ENCODE measurements at regions of chr9 and their contacts with region 1.

Region 1: GRCh38 chr9:121735065-121735789 is 83.8 kb downstream of the DAB2IP start:
- DNase-seq: peak; percentile 69 to 77
- ATAC-seq: peak; percentile 88 to 94
- H3K4me3 ChIP-seq: no peak overlapping the region; the same call in 2 of the 3 replicates
- H3K27ac ChIP-seq: peak overlapping the region; percentile 8 to 80; a peak in 3 of 6 replicates
- H3K4me1 ChIP-seq: peaks cover 38% of the 10 kb centered on the region
- CTCF ChIP-seq: peak; percentile 53; the same call in 2 of the 3 replicates
- EP300 ChIP-seq: no peak
- POLR2A ChIP-seq: no peak
- RAD21 ChIP-seq: peak; percentile 48 to 61

Region 2: DNA sequence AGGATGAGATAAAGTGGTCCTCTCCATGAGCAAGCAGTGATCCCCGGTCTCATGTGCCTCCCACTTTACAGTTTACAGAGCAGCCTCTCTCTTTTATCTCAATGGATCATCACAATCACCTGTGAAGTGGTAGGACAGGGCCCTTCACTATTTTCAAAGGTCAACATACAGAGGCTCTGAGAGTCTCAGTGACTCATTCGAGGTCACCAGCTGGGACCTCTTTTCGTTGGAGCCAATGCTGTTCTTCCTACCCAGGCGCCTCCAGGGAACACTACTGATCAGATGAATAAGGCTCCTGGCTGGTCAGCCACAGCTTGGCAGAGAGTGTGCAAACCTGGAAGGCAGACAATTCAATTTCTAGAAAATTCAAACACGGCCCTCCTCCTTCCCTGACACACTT is 252.2 kb before region 1 on chr9:
- CTCF ChIA-PET with region 1: no interaction called
- POLR2A ChIA-PET with region 1: no interaction called
- DNase-seq: no peak
- ATAC-seq: no peak; a peak in 2 of 6 replicates
- H3K4me3 ChIP-seq: no peak overlapping the region
- H3K27ac ChIP-seq: no peak overlapping the region
- H3K4me1 ChIP-seq: no peaks in the 10 kb centered on the region
- CTCF ChIP-seq: no peak
- EP300 ChIP-seq: no peak
- POLR2A ChIP-seq: no peak
- RAD21 ChIP-seq: no peak

Region 3: GRCh38 chr9:121662891-121663580 is 72.2 kb before region 1 on chr9:
- CTCF ChIA-PET with region 1: no interaction called
- POLR2A ChIA-PET with region 1: no interaction called
- DNase-seq: no peak
- ATAC-seq: no peak
- H3K4me3 ChIP-seq: no peak overlapping the region
- H3K27ac ChIP-seq: no peak overlapping the region
- H3K4me1 ChIP-seq: no peaks in the 10 kb centered on the region
- CTCF ChIP-seq: no peak
- EP300 ChIP-seq: no peak
- POLR2A ChIP-seq: no peak
- RAD21 ChIP-seq: no peak

Region 4: GRCh38 chr9:121698627-121699570 is 36.3 kb before region 1 on chr9:
- CTCF ChIA-PET with region 1: interaction called, 17 read pairs
- POLR2A ChIA-PET with region 1: no interaction called
- DNase-seq: no peak
- ATAC-seq: peak; percentile 13 to 61; a peak in 5 of 6 replicates
- H3K4me3 ChIP-seq: peak overlapping the region; percentile 55
- H3K27ac ChIP-seq: peak overlapping the region; percentile 66 to 94
- H3K4me1 ChIP-seq: peaks cover 8% of the 10 kb centered on the region; the same call in 1 of the 3 replicates
- CTCF ChIP-seq: no peak
- EP300 ChIP-seq: no peak
- POLR2A ChIP-seq: no peak
- RAD21 ChIP-seq: no peak

Region 5: GRCh38 chr9:121992571-121993212 is 257.5 kb after region 1 on chr9:
- CTCF ChIA-PET with region 1: interaction called, 32 read pairs
- POLR2A ChIA-PET with region 1: no interaction called
- DNase-seq: peak; percentile 69 to 74
- ATAC-seq: peak; percentile 90 to 92
- H3K4me3 ChIP-seq: no peak overlapping the region
- H3K27ac ChIP-seq: no peak overlapping the region
- H3K4me1 ChIP-seq: no peaks in the 10 kb centered on the region
- CTCF ChIP-seq: peak; percentile 89
- EP300 ChIP-seq: no peak
- POLR2A ChIP-seq: no peak
- RAD21 ChIP-seq: peak; percentile 85 to 91

Region 6: DNA sequence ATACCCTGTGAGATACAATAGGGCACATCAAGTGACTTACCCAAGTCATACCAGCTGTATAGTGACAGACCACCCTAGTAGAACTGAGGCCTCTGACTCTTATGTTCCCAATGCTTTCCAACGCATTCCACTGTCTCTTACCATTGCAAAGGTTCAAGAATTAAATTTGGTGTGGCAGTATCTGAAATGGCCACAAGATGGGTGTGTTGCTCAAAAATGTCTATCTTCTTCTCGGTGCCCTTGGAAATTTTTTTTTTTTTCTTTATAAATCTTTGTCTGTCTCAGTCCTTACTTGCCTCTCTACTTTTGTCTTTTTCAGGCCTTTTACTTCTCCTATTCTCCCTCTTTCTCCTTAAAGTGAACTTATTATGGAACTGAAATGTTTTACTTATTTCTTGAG is 1346.6 kb after region 1 on chr9:
- CTCF ChIA-PET with region 1: no interaction called
- POLR2A ChIA-PET with region 1: no interaction called
- DNase-seq: peak; percentile 13 to 41
- ATAC-seq: peak; percentile 73 to 83; a peak in 4 of 6 replicates
- H3K4me3 ChIP-seq: no peak overlapping the region
- H3K27ac ChIP-seq: no peak overlapping the region
- H3K4me1 ChIP-seq: no peaks in the 10 kb centered on the region
- CTCF ChIP-seq: peak; percentile 64
- EP300 ChIP-seq: no peak
- POLR2A ChIP-seq: no peak
- RAD21 ChIP-seq: peak; percentile 66 to 72